ENCODE measurements at regions of chr10 and their contacts with region 1.

Region 1: GRCh38 chr10:69262292-69262751 is 16.0 kb upstream of the HK1 start:
- DNase-seq: no peak
- H3K4me3 Mint-ChIP-seq: no peak overlapping the region
- H3K27ac Mint-ChIP-seq: peak overlapping the region; percentile 62
- H3K4me1 Mint-ChIP-seq: peaks cover 17% of the 10 kb centered on the region
- H3K27me3 Mint-ChIP-seq: no peaks in the 10 kb centered on the region

Region 2: GRCh38 chr10:69215405-69216176 is 46.7 kb before region 1 on chr10:
- CTCF ChIA-PET with region 1: no interaction called
- intact Hi-C with region 1: loop called (anchors 1 kb)
- DNase-seq: peak; percentile 76
- H3K4me3 Mint-ChIP-seq: peak overlapping the region; percentile 23
- H3K27ac Mint-ChIP-seq: peak overlapping the region; percentile 78
- H3K4me1 Mint-ChIP-seq: peaks cover 29% of the 10 kb centered on the region
- H3K27me3 Mint-ChIP-seq: no peaks in the 10 kb centered on the region

Region 3: GRCh38 chr10:69242852-69243212 is 19.5 kb before region 1 on chr10:
- CTCF ChIA-PET with region 1: no interaction called
- intact Hi-C with region 1: loop called (anchors 2 kb)
- DNase-seq: no peak
- H3K4me3 Mint-ChIP-seq: no peak overlapping the region
- H3K27ac Mint-ChIP-seq: no peak overlapping the region
- H3K4me1 Mint-ChIP-seq: peaks cover 5% of the 10 kb centered on the region
- H3K27me3 Mint-ChIP-seq: no peaks in the 10 kb centered on the region

Region 4: DNA sequence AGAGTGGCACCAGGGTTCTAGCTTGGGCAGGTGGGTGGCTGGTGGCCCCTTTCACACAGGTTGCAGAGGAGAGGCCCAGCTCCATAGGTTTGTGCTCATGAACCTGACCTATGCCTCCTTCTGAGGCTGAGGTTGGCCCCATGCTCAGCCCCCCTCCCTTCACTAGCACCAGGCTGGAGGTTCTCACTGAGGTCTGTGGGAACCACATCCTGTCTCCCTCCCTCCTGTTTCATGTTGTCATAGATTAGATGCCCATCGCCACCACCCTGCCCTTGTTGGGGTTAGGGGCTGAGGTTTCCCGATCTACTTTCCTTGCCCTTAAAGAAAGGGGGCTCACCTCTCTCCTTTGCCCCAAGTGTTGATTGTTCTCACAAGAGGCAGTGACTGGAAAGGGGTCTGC is 296.2 kb after region 1 on chr10:
- CTCF ChIA-PET with region 1: no interaction called
- intact Hi-C with region 1: no loop called
- DNase-seq: peak; percentile 30
- H3K4me3 Mint-ChIP-seq: no peak overlapping the region
- H3K27ac Mint-ChIP-seq: no peak overlapping the region
- H3K4me1 Mint-ChIP-seq: peaks cover 11% of the 10 kb centered on the region
- H3K27me3 Mint-ChIP-seq: peaks cover 6% of the 10 kb centered on the region

Measured in activated naive CD4-positive, alpha-beta T cell treated with anti-CD3 and anti-CD28 coated beads for 36 hours (primary cell).